ENCODE measurements at regions of chr11 and their contacts with region 1.

Region 1: DNA sequence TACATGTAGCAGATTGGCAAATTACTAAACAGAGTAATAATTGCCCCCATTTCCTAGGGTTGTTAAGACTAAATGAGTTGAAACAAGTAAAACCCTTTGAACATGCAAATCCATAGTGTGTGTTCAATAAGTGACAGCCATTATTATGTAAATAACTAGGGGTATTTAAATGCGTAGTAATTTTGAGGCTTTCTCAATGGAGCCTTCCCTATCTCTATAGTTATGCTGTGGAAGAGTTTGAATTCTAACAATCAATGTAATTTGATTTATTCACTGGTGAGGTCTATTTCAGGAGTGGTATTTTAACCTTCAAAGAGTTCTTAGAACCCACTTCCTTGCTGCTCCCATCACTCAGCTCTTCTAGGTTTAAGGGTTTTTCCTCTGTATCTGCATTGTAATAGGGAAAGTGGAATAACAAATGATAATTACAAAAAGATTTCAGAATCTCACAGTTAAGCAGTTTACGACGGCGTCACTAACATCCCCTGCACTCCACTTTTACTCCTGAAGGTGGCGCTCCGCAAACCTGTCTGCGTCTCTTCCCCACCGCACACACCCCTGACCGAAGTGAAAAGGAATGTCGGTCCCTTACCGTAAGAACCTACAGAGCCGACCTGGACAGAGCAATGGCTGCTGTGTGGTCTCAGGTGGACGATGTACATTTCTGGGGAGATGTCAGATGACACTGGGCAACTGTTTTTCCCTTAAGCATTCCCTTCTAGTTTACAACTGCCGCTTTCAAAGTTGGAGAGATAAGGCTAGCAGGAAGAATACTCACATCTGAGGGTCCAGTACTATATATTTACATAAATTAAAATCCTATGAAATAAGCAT is 80.8 kb downstream of the ZC3H12C start:
- DNase-seq: peak; percentile 44 to 72 (median 62)
- ATAC-seq: peak in 3 of 4 donors; percentile 75 to 82 (median 77)
- H3K4me3 ChIP-seq: peak overlapping the region in 8 of 12 donors; percentile 14 to 51 (median 28)
- H3K27ac ChIP-seq: no peak overlapping the region
- H3K4me1 ChIP-seq: peaks cover 0 to 14% (median 3%) of the 10 kb centered on the region in 12 donors
- H3K27me3 ChIP-seq: no peaks in the 10 kb centered on the region
- CTCF ChIP-seq: peak; percentile 65 to 83 (median 75)
- POLR2A ChIP-seq: no peak

Region 2: DNA sequence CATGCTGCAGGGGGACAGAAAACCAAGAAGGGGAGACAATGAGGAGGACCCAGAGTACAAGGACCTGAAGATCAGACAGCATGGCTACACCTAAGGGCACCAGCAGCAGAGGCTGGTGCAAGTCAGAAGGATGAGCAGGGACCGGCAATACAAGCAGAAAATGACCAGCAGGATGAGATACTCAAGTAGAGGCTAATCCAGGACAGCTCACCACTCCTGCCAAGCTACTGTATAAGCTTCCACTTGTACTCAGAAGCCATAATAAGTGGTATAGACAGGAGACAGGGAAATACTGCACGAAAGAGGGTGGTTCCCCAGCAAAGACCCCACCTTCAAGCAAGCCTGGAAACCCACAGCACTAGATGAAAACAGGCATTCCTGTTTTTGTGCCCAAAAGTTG is 219.5 kb before region 1 on chr11:
- intact Hi-C with region 1: loop called in 5 of 10 experiments (anchors 5 to 10 kb)
- DNase-seq: no peak
- ATAC-seq: no peak
- H3K4me3 ChIP-seq: no peak overlapping the region
- H3K27ac ChIP-seq: no peak overlapping the region
- H3K4me1 ChIP-seq: peaks cover 0 to 10% (median 0%) of the 10 kb centered on the region in 12 donors
- H3K27me3 ChIP-seq: no peaks in the 10 kb centered on the region
- CTCF ChIP-seq: no peak
- POLR2A ChIP-seq: no peak

Measured in heart left ventricle (tissue), 16 donors.